Activated B cell treated with CpG ODN at 0.5 μM for 24 hours (primary cell): ENCODE measurements at regions of chrX and their contacts with region 1.

Region 1: GRCh38 chrX:106611679-106612392 is at the start of gene RADX:
- DNase-seq: peak; percentile 66
- ATAC-seq: peak; percentile 96
- H3K4me3 Mint-ChIP-seq: peak within 1 kb of the TSS; percentile 93
- H3K27ac Mint-ChIP-seq: peak within 1 kb of the TSS; percentile 92
- H3K4me1 Mint-ChIP-seq: peaks cover 16% of the 10 kb centered on the region
- H3K27me3 Mint-ChIP-seq: no peaks in the 10 kb centered on the region
- CTCF ChIP-seq: no peak
- total RNA-seq, gene RADX: 8.5 and 10.9 TPM in 2 replicates

Region 2: DNA sequence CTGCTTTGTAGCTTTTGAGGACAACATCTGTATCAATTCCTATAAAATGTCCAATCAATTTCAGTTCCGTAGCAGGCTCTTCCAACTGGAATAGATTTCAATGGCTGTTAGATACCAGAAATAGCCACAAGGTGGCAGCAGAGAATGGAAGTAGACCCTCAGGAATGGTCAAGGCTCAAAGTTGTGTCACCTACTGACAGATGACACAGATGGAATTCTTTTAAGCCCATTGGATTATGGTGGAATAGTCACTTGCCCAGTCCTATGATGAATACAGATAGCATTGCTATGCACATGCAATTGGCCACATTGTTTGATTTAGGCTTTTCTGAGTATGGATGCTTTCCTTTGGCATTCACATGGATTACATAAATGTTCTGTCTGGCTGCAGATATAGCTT is 130.5 kb before region 1 on chrX:
- CTCF ChIA-PET with region 1: interaction called, 3 read pairs
- POLR2A ChIA-PET with region 1: interaction called, 3 read pairs
- intact Hi-C with region 1: loop called (anchors 2 kb)
- DNase-seq: no peak
- ATAC-seq: no peak
- H3K4me3 Mint-ChIP-seq: no peak overlapping the region
- H3K27ac Mint-ChIP-seq: no peak overlapping the region
- H3K4me1 Mint-ChIP-seq: peaks cover 7% of the 10 kb centered on the region
- H3K27me3 Mint-ChIP-seq: no peaks in the 10 kb centered on the region
- CTCF ChIP-seq: peak; percentile 18

Region 3: GRCh38 chrX:106802387-106803275 is 190.8 kb after region 1 on chrX and contains the start of gene TBC1D8B:
- CTCF ChIA-PET with region 1: no interaction called
- POLR2A ChIA-PET with region 1: no interaction called
- intact Hi-C with region 1: loop called (anchors 5 kb)
- DNase-seq: peak; percentile 15
- ATAC-seq: peak; percentile 93
- H3K4me3 Mint-ChIP-seq: peak within 1 kb of the TSS; percentile 96
- H3K27ac Mint-ChIP-seq: peak within 1 kb of the TSS; percentile 53
- H3K4me1 Mint-ChIP-seq: peaks cover 24% of the 10 kb centered on the region
- H3K27me3 Mint-ChIP-seq: peaks cover 4% of the 10 kb centered on the region
- CTCF ChIP-seq: no peak
- total RNA-seq, gene TBC1D8B: 6.5 and 8.4 TPM in 2 replicates

Region 4: DNA sequence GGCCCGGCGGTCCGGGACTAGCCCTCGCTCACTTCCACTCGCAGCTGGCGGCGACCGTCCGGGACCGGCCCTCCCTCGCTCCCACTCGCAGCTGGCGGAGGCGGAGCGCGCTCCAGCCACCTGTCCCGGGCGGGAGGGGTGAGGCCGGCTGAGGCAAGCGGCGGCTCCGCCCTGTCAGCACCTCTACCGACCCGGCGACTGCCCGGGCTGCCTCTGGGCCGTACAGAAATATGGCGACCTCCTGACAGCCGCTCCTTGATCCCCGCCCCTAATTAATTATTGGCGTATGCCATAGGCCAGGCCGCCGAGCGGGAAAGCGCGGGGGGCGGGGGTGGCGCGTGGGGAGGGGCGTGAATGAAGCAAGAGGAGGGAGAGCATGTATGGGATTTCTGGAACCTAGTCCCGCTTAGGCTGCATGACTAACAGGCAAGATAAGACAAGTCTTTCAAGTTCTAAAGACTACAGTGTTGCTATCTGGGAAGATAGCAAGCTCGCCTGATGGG is 388.2 kb after region 1 on chrX and contains the start of gene MORC4:
- CTCF ChIA-PET with region 1: no interaction called
- POLR2A ChIA-PET with region 1: no interaction called
- intact Hi-C with region 1: loop called (anchors 5 kb)
- DNase-seq: peak; percentile 42
- ATAC-seq: peak; percentile 88
- H3K4me3 Mint-ChIP-seq: peak within 1 kb of the TSS; percentile 89
- H3K27ac Mint-ChIP-seq: no peak within 1 kb of the TSS
- H3K4me1 Mint-ChIP-seq: peaks cover 10% of the 10 kb centered on the region
- H3K27me3 Mint-ChIP-seq: no peaks in the 10 kb centered on the region
- CTCF ChIP-seq: no peak
- total RNA-seq, gene MORC4: 3.7 and 4.1 TPM in 2 replicates

Region 5: DNA sequence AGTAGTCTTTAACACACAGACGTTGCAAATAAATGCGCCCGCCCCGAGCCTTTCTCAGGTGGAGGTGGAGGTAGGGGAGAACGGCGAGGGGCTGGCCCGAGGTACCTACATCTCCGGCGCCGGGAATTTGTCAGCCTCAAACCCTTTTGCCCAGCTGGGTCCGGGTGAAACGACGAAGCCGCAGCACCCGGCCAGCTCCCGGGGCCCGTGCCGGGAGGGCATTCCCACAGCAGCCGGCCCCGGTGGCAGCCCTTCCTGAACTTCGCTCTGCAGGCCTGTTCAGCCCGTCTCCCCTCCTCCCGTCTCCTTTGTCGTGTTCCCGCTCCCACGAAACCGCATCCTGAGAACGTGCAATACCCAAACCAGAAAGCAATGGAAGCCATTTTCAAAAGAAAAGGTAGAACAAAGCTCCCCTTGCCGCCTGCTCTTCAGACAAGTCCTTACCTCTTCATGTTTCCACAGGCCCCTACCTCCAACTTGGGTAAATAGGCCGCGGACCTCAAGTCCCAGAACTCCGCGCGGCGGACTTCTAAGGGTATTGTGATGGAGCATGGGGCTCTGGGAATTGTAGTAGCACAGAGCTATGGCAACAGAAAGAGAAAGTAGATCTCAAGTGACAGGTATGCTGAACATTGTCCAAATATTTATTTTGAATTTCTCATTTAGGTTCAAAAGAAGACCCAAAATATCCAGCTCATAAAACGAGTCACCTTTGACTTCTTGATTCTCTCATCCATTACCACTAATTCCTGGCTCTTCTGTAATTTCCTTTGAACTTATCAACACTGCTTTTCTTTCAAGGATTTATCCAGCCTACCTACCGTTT is 506.7 kb after region 1 on chrX and contains the start of gene RBM41:
- CTCF ChIA-PET with region 1: no interaction called
- POLR2A ChIA-PET with region 1: no interaction called
- intact Hi-C with region 1: loop called (anchors 1 kb)
- DNase-seq: peak; percentile 39
- ATAC-seq: peak; percentile 99
- H3K4me3 Mint-ChIP-seq: peak within 1 kb of the TSS; percentile 100
- H3K27ac Mint-ChIP-seq: peak within 1 kb of the TSS; percentile 96
- H3K4me1 Mint-ChIP-seq: peaks cover 26% of the 10 kb centered on the region
- H3K27me3 Mint-ChIP-seq: no peaks in the 10 kb centered on the region
- CTCF ChIP-seq: no peak
- total RNA-seq, gene RBM41: 16.5 and 18.5 TPM in 2 replicates

Region 6: GRCh38 chrX:107205770-107206696 is 594.2 kb after region 1 on chrX and contains the starts of genes DNAAF6 and NUP62CL:
- CTCF ChIA-PET with region 1: no interaction called
- POLR2A ChIA-PET with region 1: no interaction called
- intact Hi-C with region 1: loop called (anchors 5 kb)
- DNase-seq: peak; percentile 41
- ATAC-seq: peak; percentile 92
- H3K4me3 Mint-ChIP-seq: peak within 1 kb of the TSS; percentile 90
- H3K27ac Mint-ChIP-seq: peak within 1 kb of the TSS; percentile 53
- H3K4me1 Mint-ChIP-seq: peaks cover 8% of the 10 kb centered on the region
- H3K27me3 Mint-ChIP-seq: no peaks in the 10 kb centered on the region
- CTCF ChIP-seq: no peak
- total RNA-seq, gene DNAAF6: not detected in 2 replicates
- total RNA-seq, gene NUP62CL: 1.1 and 1.4 TPM in 2 replicates